PC-9 (cell line): ENCODE measurements at regions of chr5 and their contacts with region 1.

Region 1: DNA sequence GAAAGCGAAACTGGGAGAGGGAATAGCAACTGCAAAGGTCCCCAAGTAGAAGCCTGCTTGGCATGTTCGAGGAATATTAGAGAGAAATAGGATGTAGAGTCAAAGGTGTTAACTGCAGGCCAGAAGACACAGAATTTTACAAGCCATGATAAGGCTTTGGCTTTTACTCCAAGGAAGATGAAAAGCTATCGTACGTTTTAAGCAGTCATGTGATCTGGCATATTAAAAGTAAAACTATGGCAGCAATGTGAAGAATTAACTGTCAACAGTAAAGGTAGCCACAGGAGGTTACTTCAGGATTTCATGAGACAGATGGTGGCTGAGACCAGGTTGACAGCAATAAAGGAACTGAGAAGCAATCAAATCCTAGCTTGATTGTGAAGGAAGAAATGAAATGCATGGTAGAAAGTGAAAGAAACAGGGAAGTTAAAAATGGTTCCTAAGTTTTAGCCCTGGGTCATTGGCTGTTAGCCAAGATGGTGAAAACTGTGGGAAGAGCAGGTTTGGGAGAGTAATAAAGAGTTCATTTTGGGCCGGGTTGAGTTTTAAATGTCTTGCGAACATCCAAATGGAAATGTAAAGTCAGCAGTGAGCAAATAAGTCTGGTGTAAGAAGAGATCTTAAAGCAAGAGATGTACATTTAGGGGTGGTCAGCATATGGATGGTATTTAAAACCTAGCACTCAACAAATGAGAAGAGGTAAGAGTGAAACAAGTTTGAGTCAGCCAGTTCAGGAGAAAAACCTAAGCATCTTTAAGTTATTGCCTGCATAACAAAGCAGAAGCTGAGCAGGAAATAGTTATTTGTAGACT is 20.3 kb upstream of the TTC33 start:
- DNase-seq: no peak
- H3K4me3 ChIP-seq: no peak overlapping the region
- H3K27ac ChIP-seq: peak overlapping the region; percentile 27
- H3K4me1 ChIP-seq: peaks cover 18% of the 10 kb centered on the region; the same call in 1 of the 2 replicates
- H3K27me3 ChIP-seq: no peaks in the 10 kb centered on the region
- CTCF ChIP-seq: no peak

Region 2: DNA sequence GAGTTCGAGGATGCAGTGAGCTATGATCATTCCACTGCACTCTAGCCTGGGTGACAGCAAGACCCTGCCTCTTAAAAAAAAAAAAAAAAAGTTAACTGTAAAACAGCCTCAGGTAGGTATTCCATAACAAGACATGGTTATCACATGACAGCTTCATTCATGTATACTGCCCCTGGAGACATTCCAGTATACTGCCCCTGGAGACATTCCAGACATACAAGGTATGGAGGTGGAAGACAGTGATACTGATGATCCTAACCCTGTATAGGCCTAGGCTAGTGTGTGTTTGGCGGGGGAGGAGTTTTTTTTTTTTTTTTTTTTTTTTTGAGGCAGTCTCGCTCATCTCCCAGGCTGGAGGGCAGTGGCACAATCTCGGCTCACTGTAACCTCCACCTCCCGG is 1807.4 kb before region 1 on chr5:
- CTCF ChIA-PET with region 1: no interaction called
- POLR2A ChIA-PET with region 1: interaction called, 15 read pairs
- intact Hi-C with region 1: no loop called
- DNase-seq: no peak
- H3K4me3 ChIP-seq: no peak overlapping the region
- H3K27ac ChIP-seq: no peak overlapping the region
- H3K4me1 ChIP-seq: no peaks in the 10 kb centered on the region
- H3K27me3 ChIP-seq: no peaks in the 10 kb centered on the region
- CTCF ChIP-seq: no peak

Region 3: DNA sequence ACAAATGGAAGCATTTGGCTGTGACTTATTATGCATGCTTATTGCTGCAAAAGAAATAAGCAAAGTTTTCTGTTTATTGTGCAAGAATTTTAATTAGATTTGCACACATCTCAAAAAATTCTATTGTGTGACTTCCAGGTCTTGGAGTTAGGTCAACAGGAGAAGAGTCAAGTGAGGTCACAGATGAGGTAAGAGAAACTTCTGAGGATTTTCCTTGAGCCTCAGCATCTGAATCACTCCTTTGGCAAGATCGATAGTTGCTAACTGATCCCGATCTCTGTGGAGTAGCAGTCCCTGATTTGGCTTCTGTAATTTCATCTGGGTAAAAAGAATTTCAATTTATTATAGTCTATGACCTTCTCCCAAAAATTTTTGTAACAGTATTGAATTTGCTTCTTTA is 13.3 kb before region 1 on chr5:
- CTCF ChIA-PET with region 1: interaction called, 10 read pairs
- POLR2A ChIA-PET with region 1: no interaction called
- intact Hi-C with region 1: no loop called
- DNase-seq: no peak
- H3K4me3 ChIP-seq: no peak overlapping the region
- H3K27ac ChIP-seq: no peak overlapping the region
- H3K4me1 ChIP-seq: no peaks in the 10 kb centered on the region
- H3K27me3 ChIP-seq: no peaks in the 10 kb centered on the region
- CTCF ChIP-seq: no peak

Region 4: DNA sequence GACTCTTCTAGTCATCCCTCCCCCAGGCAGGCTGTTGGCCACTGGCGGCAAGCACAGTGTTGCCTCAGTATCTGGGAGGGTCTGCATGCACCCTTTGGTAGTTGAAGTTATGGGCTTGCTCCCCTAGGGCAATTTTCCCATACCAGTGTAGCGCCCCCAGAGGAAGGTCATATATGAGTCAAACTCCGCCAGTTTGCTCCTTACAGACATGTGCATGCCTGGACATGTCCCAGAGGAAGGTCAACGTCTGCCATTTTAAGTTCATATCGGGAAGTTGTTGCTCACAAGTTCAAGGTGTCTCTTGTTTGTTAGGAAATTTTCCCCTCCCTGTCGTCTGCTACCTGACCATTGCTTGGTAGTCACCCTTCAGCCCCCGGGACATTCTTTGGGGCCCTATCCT is 346.4 kb after region 1 on chr5:
- CTCF ChIA-PET with region 1: interaction called, 10 read pairs
- POLR2A ChIA-PET with region 1: no interaction called
- intact Hi-C with region 1: no loop called
- DNase-seq: no peak
- H3K4me3 ChIP-seq: no peak overlapping the region
- H3K27ac ChIP-seq: no peak overlapping the region
- H3K4me1 ChIP-seq: no peaks in the 10 kb centered on the region
- H3K27me3 ChIP-seq: no peaks in the 10 kb centered on the region
- CTCF ChIP-seq: no peak